Sciatic nerve (tissue), 2 donors: ENCODE measurements at regions of chr2 and their contacts with region 1.

Region 1: DNA sequence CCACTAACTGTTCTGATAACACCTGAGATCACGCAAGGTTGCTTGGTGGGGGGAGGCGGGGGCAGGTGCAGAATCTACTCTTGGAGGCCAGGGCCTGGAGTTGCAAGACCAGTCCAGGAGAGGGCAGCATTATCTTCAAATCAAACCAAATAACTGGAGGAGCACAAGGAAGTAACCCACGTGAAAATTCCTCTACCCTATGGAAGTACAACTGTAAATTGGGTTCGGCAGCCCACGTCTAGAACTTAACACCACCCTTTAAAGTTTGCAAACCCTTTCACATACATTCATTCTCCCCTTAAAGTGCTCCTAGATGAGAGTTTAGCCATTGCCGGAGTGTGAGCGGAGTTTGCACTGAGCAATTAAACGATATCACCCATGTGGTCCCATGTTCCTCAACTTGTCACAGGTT is 19.6 kb upstream of the CXCR1 start:
- DNase-seq: peak; percentile 71
- ATAC-seq: peak; percentile 88

Region 2: DNA sequence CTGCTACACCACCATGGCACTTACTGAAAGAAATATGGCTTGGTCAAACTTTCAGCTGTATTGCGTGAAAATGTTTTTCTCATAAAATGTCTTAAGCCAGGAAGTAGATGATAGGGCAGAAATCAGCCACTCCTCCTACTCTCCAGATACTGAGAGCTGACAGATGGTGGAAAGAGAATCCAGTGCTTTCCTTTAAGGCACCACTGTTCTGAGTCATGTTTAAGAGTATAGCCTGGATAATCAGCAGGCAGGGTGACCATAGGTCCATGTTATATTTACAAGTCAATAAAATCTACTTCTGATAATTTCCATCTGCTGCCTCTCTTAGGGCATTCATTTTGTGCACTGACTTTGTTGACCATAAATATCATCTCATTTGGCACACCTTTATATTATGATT is 52.5 kb after region 1 on chr2:
- intact Hi-C with region 1: no loop called
- DNase-seq: no peak
- ATAC-seq: no peak

Region 3: DNA sequence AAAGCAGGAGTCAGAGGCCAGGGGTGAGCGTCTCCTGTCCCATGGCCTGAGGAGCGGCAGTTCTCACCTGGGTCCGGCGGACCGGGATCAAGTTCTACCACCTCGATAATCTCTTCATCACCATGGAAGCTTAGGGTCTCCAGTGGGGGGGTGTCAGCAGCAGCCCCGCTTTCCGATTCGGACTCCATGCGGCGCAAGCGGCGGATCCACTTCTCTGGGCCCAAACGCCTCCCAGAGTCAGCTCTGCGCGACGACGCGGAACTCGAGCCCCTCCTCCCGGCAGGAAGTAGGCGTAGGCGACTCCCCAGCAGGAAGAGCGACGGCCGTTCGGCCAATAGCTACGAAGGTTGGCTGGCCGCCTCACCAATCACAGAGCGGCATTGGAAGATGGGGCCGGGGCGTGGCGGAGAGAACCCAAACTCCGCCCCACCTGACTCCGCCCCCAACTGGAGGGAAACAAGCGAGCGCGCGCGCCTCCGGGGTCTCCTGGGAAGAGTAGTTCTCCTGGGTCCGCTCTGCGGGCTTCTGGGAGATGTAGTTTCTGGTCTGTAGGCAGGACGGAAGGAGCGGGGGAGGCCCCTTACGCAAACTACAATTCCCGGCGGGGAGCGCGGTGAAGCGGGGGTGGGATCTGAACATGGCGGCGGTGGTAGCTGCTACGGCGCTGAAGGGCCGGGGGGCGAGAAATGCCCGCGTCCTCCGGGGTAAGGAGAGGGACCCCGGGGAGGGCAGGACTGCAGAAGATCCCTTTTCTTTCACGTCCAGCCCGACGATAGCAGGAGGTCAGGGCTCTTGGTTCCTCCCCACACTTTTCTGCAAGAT is 83.7 kb after region 1 on chr2 and contains the starts of genes AAMP and PNKD:
- intact Hi-C with region 1: loop called (anchors 10 kb)
- DNase-seq: peak; percentile 100
- ATAC-seq: peak; percentile 95
- total RNA-seq, gene AAMP: 59.9 TPM
- total RNA-seq, gene PNKD: 56.3 TPM

Region 4: DNA sequence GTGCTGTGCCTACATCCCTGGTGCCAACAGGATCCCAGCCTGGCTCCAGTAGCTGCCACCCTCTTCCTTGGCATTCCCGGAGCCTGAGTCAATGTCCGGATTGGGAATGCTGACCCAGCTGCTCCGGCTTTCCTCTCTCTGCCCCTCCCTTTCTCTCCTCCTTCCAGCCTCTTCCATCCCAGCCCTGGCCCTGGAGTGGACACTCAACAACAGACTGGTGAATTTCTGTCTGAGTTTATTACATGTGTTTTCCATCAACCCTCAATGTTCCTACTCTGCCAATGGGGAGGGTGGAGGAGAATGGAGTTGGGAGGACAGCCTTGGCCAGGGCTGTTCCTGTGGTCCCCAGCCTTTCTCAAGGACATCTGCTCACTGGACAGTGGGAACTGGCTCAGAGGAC is 646.2 kb after region 1 on chr2:
- intact Hi-C with region 1: no loop called
- DNase-seq: peak; percentile 50
- ATAC-seq: peak; percentile 79